Esophagus squamous epithelium (tissue), 5 donors: ENCODE measurements at regions of chr1 and their contacts with region 1.

Region 1: GRCh38 chr1:16498573-16499413 is 15.3 kb downstream of the RNU1-1 start:
- DNase-seq: no peak
- H3K4me3 ChIP-seq: peak overlapping the region; percentile 75 to 97 (median 89)
- H3K27ac ChIP-seq: peak overlapping the region; percentile 71 to 91 (median 88)
- H3K4me1 ChIP-seq: peaks cover 7 to 25% (median 7%) of the 10 kb centered on the region in 3 donors
- H3K27me3 ChIP-seq: no peaks in the 10 kb centered on the region
- CTCF ChIP-seq: peak in 2 of 6 experiments; percentile 8 to 17
- POLR2A ChIP-seq: peak in 2 of 4 donors; percentile 48 to 49

Region 2: DNA sequence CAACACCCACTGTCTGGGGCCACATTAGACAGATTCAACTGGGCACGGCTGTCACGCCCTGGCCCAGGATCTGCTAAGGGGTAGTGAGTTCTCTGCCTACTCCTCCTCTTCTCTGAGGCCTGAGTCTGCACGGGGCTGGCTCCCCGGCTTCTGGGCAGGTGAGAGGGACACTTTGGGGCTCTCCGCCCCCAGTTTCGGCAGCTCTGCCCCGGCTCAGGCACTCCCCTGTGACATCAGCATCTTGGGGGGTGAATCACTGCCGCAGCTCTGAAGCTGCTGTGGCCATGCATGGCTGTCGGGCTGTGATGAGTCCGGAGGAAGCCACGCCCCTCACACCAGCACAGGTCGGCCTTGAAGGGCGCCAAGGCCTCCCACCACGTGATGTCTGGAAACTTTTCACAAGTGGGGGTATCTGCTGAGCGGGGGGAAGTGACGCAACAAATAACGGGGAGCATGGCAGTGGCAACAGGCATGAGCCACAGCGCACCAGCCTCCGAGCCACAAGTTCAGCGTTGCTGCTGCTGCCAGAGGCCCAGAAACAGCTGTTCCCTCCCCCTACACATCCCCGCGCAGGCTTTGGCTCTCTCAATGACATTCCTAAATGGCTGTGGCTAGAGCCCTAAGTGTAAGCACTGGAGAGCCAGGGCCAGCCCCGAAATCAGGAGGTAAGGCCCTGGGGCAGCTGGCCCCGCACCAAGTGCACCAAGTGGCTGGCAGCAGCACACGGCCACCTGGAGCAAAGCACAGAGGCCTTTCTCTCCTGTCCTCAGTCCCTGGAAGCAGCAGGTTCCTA is 549.1 kb before region 1 on chr1:
- intact Hi-C with region 1: no loop called
- DNase-seq: peak; percentile 78
- H3K4me3 ChIP-seq: peak overlapping the region in 3 of 4 donors; percentile 19 to 55 (median 31)
- H3K27ac ChIP-seq: peak overlapping the region; percentile 89 to 97 (median 96)
- H3K4me1 ChIP-seq: peaks cover 61 to 75% (median 69%) of the 10 kb centered on the region in 3 donors
- H3K27me3 ChIP-seq: no peaks in the 10 kb centered on the region
- CTCF ChIP-seq: no peak
- POLR2A ChIP-seq: peak in 2 of 4 donors; percentile 9 to 56

Region 3: DNA sequence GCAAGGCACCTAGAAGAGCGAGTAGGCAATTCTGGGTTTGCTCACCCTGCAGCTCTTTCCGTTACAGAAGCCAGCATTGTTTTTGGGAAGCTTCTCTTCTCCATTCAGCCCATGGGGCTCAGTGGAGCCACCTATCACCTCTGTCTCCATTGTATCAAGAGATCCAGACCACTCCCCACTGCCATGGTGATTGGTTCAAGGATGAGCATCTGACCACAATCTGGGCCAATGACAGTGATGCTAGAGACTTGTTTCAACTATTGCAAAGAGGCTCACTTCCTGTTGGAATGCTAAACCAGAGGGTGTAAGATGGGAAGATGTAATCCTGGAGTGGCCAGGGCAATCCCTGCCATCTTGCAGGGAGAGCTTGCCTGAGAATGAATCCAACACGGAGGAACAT is 68.2 kb before region 1 on chr1:
- intact Hi-C with region 1: no loop called
- DNase-seq: no peak
- H3K4me3 ChIP-seq: no peak overlapping the region
- H3K27ac ChIP-seq: no peak overlapping the region
- H3K4me1 ChIP-seq: no peaks in the 10 kb centered on the region
- H3K27me3 ChIP-seq: peaks cover 0 to 7% (median 0%) of the 10 kb centered on the region in 4 donors
- CTCF ChIP-seq: no peak
- POLR2A ChIP-seq: no peak

Region 4: GRCh38 chr1:16440470-16441281 is 58.1 kb before region 1 on chr1 and contains the start of gene NECAP2:
- intact Hi-C with region 1: loop called (anchors 10 kb)
- DNase-seq: peak; percentile 18
- H3K4me3 ChIP-seq: peak within 1 kb of the TSS; percentile 92 to 98 (median 95)
- H3K27ac ChIP-seq: peak within 1 kb of the TSS; percentile 85 to 96 (median 91)
- H3K4me1 ChIP-seq: peaks cover 11 to 44% (median 30%) of the 10 kb centered on the region in 3 donors
- H3K27me3 ChIP-seq: no peaks in the 10 kb centered on the region
- CTCF ChIP-seq: peak; percentile 76 to 93 (median 89)
- POLR2A ChIP-seq: peak in 2 of 4 donors; percentile 14 to 55
- total RNA-seq, gene NECAP2: 38.5 to 48.4 (median 47.2) TPM